Colonic mucosa (tissue), 4 donors: ENCODE measurements at regions of chr1 and their contacts with region 1.

Region 1: GRCh38 chr1:160006312-160006940 is 25.4 kb downstream of the PIGM start:
- DNase-seq: peak; percentile 80
- H3K4me3 ChIP-seq: no peak overlapping the region
- H3K27ac ChIP-seq: no peak overlapping the region
- H3K4me1 ChIP-seq: no peaks in the 10 kb centered on the region
- H3K27me3 ChIP-seq: no peaks in the 10 kb centered on the region
- CTCF ChIP-seq: peak; percentile 82

Region 2: DNA sequence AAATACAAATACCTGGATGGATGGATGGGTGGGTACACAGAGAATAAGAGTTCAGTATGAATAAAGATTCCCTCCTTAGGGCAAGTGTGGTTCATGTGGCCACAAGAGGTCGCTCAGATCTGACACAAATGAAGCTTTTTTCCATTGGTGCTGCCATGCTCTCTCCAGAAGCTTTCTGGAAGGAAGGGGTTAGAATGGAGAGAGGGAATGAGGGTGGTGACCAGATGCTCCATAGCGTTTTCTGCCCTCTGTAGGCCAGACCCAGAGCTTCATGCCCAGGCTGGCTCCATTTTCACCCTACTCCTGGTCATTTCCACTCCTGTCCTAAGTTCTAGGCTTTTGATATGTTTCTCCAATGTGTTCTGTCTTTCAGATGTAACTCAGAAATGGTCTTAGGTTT is 207.5 kb before region 1 on chr1:
- intact Hi-C with region 1: loop called (anchors 10 kb)
- DNase-seq: peak; percentile 73
- H3K4me3 ChIP-seq: no peak overlapping the region
- H3K27ac ChIP-seq: no peak overlapping the region
- H3K4me1 ChIP-seq: no peaks in the 10 kb centered on the region
- H3K27me3 ChIP-seq: peaks cover 1% of the 10 kb centered on the region
- CTCF ChIP-seq: peak; percentile 74

Region 3: DNA sequence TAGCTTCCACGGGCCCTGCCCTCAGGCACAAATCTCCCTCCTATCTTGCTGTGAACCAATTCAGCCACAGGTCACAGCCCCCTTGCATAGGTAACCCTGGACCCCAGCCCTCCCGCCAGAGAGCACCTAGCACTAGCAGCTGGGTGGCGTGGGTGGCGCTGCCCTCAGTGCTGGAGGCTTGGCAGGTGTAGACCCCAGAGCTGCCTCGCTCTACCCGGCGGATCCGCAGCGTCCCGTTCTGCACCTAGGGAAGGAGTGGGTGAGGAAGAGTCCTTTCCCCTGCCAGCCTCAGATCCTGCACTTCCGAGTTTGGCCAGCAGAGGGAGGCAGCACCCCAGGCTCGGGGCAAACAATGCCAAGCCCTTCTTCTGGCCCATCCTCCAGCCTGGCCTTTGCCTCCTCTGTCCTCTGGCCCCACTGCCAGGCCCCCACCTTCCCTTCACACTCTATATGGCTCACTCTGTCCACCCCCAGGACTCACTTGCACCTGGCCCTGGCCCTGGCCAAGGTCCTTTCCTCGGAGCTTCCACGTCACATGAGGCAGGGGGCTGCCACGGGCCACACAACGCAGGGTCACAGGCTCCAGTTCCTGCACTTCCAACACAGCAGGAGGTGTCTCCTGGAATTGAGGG is 70.0 kb before region 1 on chr1:
- intact Hi-C with region 1: loop called (anchors 1 kb)
- DNase-seq: peak; percentile 94
- H3K4me3 ChIP-seq: no peak overlapping the region
- H3K27ac ChIP-seq: no peak overlapping the region
- H3K4me1 ChIP-seq: peaks cover 32% of the 10 kb centered on the region
- H3K27me3 ChIP-seq: no peaks in the 10 kb centered on the region
- CTCF ChIP-seq: peak; percentile 97